Tibial artery (tissue), 4 donors: ENCODE measurements at regions of chr20 and their contacts with region 1.

Region 1: GRCh38 chr20:41339507-41340326 is 904 bp upstream of the LPIN3 start:
- DNase-seq: peak; percentile 75 to 89
- H3K4me3 ChIP-seq: peak overlapping the region; percentile 45 to 57
- H3K27ac ChIP-seq: peak overlapping the region; percentile 82 to 84
- H3K4me1 ChIP-seq: peaks cover 0 to 49% (median 25%) of the 10 kb centered on the region in 4 donors
- H3K27me3 ChIP-seq: no peaks in the 10 kb centered on the region
- CTCF ChIP-seq: peak; percentile 99

Region 2: DNA sequence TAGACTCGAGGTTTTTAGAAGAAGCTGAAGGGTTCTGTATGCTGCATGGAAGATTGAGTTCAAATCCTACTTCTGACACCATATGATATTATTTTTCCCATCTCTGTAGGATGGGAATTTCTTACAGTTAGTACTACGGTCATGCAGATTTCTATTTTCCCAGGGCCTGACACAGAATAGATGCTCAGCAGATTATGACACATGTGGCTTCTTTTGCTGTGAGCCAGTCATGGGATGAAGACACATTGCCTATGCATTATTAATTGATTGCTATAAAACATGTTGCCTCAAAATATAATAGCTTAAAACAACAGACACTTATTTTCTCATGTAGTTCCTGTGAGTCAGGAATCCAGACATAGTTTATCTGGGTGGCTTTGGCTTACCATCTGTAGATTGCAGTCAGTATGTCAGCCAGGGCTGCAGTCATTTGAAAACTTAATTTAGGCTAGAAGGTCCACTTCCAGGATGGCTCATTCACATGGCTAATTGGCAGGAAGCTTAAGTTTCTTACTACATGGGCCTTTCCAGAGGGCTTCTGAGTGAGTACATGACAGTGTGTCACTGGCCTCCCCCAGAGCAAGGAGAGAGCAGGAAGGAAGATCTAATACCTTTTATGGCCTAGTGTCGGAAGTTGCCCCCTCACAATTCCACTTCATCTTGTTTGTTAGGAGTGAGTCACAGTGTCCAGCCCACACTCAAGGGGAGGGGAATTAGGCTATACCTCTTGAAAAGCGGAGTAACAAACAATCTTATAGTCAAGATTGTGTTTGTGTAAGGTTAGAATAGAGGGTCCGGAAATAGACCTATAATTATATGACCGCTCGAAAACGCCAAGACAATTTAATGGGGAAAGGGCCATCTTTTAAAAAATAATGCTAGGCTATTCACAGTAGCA is 281.5 kb before region 1 on chr20:
- intact Hi-C with region 1: no loop called
- DNase-seq: no peak
- H3K4me3 ChIP-seq: no peak overlapping the region
- H3K27ac ChIP-seq: no peak overlapping the region
- H3K4me1 ChIP-seq: peaks cover 0 to 52% (median 14%) of the 10 kb centered on the region in 4 donors
- H3K27me3 ChIP-seq: no peaks in the 10 kb centered on the region
- CTCF ChIP-seq: no peak

Region 3: GRCh38 chr20:41218466-41218865 is 121.3 kb before region 1 on chr20:
- intact Hi-C with region 1: no loop called
- DNase-seq: no peak
- H3K4me3 ChIP-seq: no peak overlapping the region
- H3K27ac ChIP-seq: no peak overlapping the region
- H3K4me1 ChIP-seq: peaks cover 0 to 40% (median 20%) of the 10 kb centered on the region in 4 donors
- H3K27me3 ChIP-seq: no peaks in the 10 kb centered on the region
- CTCF ChIP-seq: no peak

Region 4: GRCh38 chr20:41232973-41233926 is 106.5 kb before region 1 on chr20:
- intact Hi-C with region 1: loop called (anchors 5 kb)
- DNase-seq: no peak
- H3K4me3 ChIP-seq: no peak overlapping the region
- H3K27ac ChIP-seq: peak overlapping the region; percentile 65 to 83
- H3K4me1 ChIP-seq: peaks cover 0 to 64% (median 39%) of the 10 kb centered on the region in 4 donors
- H3K27me3 ChIP-seq: no peaks in the 10 kb centered on the region
- CTCF ChIP-seq: no peak

Region 5: DNA sequence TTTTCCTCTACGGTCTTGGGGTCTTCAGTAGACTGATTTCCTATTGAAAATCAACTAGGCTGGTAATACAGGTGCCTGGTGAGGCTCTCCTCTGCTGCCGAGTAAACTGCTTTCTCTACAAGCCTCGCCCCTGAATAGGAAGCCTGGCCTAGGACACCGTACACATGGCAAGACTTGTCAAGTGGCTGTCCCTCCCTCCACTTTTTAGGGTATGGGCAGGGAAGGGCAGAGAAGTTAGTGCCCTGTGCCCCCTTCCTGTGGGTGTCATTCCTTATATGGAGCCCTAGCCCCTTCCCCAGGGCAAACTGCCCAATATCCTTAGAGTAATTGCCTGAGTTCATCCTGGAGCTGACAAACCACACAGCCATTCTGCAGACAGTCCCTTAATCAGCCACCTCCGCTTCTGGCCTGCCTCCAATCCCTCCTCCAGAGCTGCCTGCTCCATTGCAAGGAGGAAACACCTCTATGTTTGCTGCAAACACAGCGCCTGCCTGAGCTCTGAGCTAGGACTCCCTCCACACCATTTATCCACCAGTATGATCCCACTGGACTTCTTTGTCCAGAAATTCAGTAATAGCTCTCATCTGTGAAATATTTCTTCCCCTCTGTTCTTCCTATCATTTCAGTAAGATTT is 185.4 kb after region 1 on chr20:
- intact Hi-C with region 1: no loop called
- DNase-seq: peak; percentile 31 to 70
- H3K4me3 ChIP-seq: no peak overlapping the region
- H3K27ac ChIP-seq: no peak overlapping the region
- H3K4me1 ChIP-seq: peaks cover 0 to 22% (median 11%) of the 10 kb centered on the region in 4 donors
- H3K27me3 ChIP-seq: no peaks in the 10 kb centered on the region
- CTCF ChIP-seq: no peak